HCT116 (cell line): ENCODE measurements at regions of chr2 and their contacts with region 1.

Region 1: GRCh38 chr2:219308142-219309093 is 783 bp downstream of the PTPRN start:
- DNase-seq: peak; percentile 29
- ATAC-seq: peak; percentile 95
- H3K4me3 ChIP-seq: peak overlapping the region in 1 of 2 experiments; percentile 12; a peak in 1 of 4 replicates
- H3K27ac ChIP-seq: no peak overlapping the region
- H3K4me1 ChIP-seq: peaks cover 0 to 12% of the 10 kb centered on the region in 2 experiments; a peak in 2 of 4 replicates
- H3K27me3 ChIP-seq: peaks cover 37% of the 10 kb centered on the region
- CTCF ChIP-seq: no peak
- POLR2A ChIP-seq: no peak
- RAD21 ChIP-seq: no peak

Region 2: DNA sequence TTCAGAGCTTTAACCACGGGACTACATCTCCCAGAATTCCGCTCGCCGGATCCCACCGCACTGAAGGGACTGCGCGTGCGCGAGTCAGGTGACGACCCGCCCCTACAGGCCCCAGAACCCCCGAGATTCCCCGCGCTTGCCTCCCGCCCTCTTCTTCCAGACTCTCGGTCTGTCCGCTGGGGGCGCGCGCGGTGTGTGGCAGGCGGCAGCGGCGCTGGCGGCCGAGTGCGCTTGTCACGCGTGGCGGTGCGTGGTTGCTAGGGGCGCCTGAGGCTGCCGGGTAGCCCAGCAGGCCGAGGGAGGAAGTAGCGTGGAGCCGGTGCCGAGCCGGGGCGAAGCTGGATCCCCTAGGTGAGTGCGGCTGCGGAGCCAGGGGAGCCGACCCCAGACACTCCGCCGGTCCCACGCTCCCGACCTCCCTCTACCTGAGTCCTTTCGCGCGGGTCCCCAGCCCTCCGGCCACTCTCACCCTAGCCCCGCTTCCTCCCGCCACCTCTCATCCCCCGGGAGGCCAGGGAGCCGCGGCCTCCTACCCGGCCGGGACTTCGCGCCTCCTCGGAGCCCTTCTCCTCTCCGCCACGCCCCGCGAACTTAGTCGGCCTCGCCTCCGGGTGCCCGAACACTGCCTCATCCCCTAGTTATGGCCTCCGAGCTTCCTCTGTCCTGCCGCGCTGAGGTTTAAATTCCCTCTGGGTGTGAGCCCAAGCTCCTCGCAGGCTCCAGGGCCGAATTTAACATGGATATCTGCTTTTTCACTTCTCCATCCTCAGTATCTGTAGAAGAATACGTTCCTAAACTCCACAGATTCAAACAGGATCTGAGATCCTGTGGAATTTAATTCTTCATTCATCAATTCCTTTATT is 597.5 kb before region 1 on chr2 and contains the start of gene TTLL4:
- CTCF ChIA-PET with region 1: no interaction called
- POLR2A ChIA-PET with region 1: no interaction called
- RAD21 ChIA-PET with region 1: no interaction called
- intact Hi-C with region 1: no loop called
- DNase-seq: peak; percentile 87
- ATAC-seq: peak; percentile 97
- H3K4me3 ChIP-seq: peak within 1 kb of the TSS; percentile 73 to 79
- H3K27ac ChIP-seq: peak within 1 kb of the TSS; percentile 84
- H3K4me1 ChIP-seq: peaks cover 0 to 11% of the 10 kb centered on the region in 2 experiments; a peak in 2 of 4 replicates
- H3K27me3 ChIP-seq: no peaks in the 10 kb centered on the region
- CTCF ChIP-seq: peak; percentile 75 to 88 (median 76)
- POLR2A ChIP-seq: peak; percentile 65
- RAD21 ChIP-seq: peak; percentile 76
- total RNA-seq, gene TTLL4: 53.0 TPM

Region 3: GRCh38 chr2:219041252-219041651 is 267.2 kb before region 1 on chr2 and contains the start of gene CFAP65:
- CTCF ChIA-PET with region 1: no interaction called
- POLR2A ChIA-PET with region 1: no interaction called
- RAD21 ChIA-PET with region 1: no interaction called
- intact Hi-C with region 1: loop called (anchors 5 kb)
- DNase-seq: peak; percentile 34
- ATAC-seq: peak; percentile 79
- H3K4me3 ChIP-seq: peak within 1 kb of the TSS; percentile 43 to 47
- H3K27ac ChIP-seq: no peak within 1 kb of the TSS
- H3K4me1 ChIP-seq: no peaks in the 10 kb centered on the region
- H3K27me3 ChIP-seq: peaks cover 24% of the 10 kb centered on the region
- CTCF ChIP-seq: no peak
- POLR2A ChIP-seq: no peak
- RAD21 ChIP-seq: no peak
- total RNA-seq, gene CFAP65: 0.52 TPM

Region 4: GRCh38 chr2:219253753-219254590 is 54.4 kb before region 1 on chr2 and contains the start of gene TUBA4A:
- CTCF ChIA-PET with region 1: no interaction called
- POLR2A ChIA-PET with region 1: no interaction called
- RAD21 ChIA-PET with region 1: no interaction called
- intact Hi-C with region 1: no loop called
- DNase-seq: peak; percentile 49
- ATAC-seq: peak; percentile 87
- H3K4me3 ChIP-seq: peak within 1 kb of the TSS; percentile 69 to 84
- H3K27ac ChIP-seq: peak within 1 kb of the TSS; percentile 55
- H3K4me1 ChIP-seq: peaks cover 25 to 52% of the 10 kb centered on the region in 2 experiments
- H3K27me3 ChIP-seq: peaks cover 5% of the 10 kb centered on the region; the same call in 1 of the 2 replicates
- CTCF ChIP-seq: no peak
- POLR2A ChIP-seq: peak; percentile 96
- RAD21 ChIP-seq: no peak
- total RNA-seq, gene TUBA4A: 32.7 TPM